ENCODE measurements at regions of chr10 and their contacts with region 1.

Region 1: GRCh38 chr10:122435212-122435827 is 19.1 kb upstream of the ARMS2 start:
- DNase-seq: no peak
- H3K4me3 ChIP-seq: no peak overlapping the region
- H3K27ac ChIP-seq: no peak overlapping the region
- H3K4me1 ChIP-seq: no peaks in the 10 kb centered on the region
- H3K27me3 ChIP-seq: no peaks in the 10 kb centered on the region
- CTCF ChIP-seq: peak; percentile 47 to 82 (median 62)
- POLR2A ChIP-seq: no peak

Region 2: DNA sequence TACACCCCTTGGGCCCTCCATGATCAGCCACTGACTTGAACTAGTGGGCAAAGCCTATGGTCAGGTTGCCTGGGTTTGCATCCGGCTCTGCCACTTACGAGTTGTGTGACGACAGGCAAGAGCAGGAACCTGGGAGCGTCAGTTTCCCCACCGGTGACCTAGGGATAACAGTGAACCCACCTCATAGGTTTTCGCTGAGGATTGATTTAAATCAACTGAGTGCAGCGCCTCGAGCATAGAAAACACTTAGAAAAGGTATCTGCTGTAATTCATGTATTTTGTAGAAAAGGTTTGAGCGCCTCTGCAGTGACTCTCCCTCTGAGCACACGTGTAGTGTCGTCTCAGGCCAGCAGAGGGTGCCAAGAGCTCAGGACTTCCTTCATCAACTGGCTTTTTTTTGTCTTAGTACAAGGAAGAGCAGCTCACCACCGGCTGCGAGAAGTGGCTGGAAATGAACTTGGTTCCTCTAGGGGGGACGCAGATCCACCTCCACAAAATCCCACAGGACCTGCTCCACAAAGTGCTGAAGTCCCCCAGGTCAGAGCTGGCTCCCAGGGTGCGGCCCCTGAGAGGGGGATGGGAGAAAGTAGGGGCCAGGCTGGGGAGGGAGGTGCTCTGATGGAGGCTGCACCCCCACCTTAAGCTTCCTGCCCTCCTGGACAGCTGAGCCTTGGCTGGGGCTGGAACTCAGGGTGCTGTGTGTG is 136.6 kb before region 1 on chr10:
- intact Hi-C with region 1: loop called (anchors 5 kb)
- DNase-seq: peak; percentile 80
- H3K4me3 ChIP-seq: no peak overlapping the region
- H3K27ac ChIP-seq: no peak overlapping the region
- H3K4me1 ChIP-seq: no peaks in the 10 kb centered on the region
- H3K27me3 ChIP-seq: no peaks in the 10 kb centered on the region
- CTCF ChIP-seq: peak; percentile 78 to 86 (median 79)
- POLR2A ChIP-seq: no peak

Region 3: DNA sequence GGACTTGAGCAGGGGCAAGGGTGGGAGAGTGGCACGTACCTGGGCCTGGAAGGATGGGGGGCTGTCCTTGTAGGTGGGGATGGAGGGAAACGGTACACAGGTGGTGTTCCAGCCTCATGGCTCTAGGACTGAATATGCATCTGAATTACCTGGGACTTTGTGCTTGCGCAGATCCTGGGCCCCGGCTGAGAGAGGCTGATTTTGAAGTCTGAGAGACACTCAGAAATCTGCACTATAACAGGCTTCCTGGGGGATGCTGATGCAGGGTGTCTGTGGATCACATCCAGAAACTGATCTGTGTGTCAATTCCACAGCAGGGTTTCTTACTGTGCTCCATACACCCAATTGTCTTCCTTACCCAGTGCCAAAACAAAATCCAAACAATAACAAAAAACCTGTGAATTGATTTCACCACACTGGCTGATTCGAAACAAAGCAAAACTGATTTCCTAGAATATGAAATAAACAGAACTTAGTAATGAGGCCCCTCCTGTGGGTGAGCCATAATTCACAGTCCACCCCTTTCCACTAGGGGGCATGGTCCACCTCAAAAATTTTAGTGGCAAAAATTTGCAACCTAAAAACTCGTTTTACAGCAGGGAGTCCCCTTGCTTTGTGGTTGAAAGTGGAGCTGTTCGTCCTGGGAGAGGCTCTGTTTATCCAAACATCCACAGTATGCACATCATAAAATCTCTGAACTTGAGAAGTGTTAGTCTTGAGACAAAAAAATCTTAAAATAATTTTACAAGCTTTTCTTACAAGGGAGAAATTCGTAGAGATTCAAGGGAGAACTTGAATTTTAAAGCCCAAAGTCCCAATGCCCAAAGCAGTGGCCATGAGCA is 92.8 kb before region 1 on chr10:
- intact Hi-C with region 1: loop called (anchors 10 kb)
- DNase-seq: peak; percentile 36
- H3K4me3 ChIP-seq: no peak overlapping the region
- H3K27ac ChIP-seq: no peak overlapping the region
- H3K4me1 ChIP-seq: no peaks in the 10 kb centered on the region
- H3K27me3 ChIP-seq: no peaks in the 10 kb centered on the region
- CTCF ChIP-seq: peak; percentile 71 to 86 (median 76)
- POLR2A ChIP-seq: no peak

Measured in testis (tissue), 5 donors.